MCF 10A (cell line): ENCODE measurements at regions of chr15 and their contacts with region 1.

Region 1: GRCh38 chr15:66946578-66947164 is 118.7 kb upstream of the SMAD3 start:
- DNase-seq: peak; percentile 83
- H3K4me3 Mint-ChIP-seq: no peak overlapping the region
- H3K27ac Mint-ChIP-seq: no peak overlapping the region
- H3K4me1 Mint-ChIP-seq: peaks cover 7% of the 10 kb centered on the region
- H3K27me3 Mint-ChIP-seq: no peaks in the 10 kb centered on the region
- CTCF ChIP-seq: peak; percentile 94

Region 2: DNA sequence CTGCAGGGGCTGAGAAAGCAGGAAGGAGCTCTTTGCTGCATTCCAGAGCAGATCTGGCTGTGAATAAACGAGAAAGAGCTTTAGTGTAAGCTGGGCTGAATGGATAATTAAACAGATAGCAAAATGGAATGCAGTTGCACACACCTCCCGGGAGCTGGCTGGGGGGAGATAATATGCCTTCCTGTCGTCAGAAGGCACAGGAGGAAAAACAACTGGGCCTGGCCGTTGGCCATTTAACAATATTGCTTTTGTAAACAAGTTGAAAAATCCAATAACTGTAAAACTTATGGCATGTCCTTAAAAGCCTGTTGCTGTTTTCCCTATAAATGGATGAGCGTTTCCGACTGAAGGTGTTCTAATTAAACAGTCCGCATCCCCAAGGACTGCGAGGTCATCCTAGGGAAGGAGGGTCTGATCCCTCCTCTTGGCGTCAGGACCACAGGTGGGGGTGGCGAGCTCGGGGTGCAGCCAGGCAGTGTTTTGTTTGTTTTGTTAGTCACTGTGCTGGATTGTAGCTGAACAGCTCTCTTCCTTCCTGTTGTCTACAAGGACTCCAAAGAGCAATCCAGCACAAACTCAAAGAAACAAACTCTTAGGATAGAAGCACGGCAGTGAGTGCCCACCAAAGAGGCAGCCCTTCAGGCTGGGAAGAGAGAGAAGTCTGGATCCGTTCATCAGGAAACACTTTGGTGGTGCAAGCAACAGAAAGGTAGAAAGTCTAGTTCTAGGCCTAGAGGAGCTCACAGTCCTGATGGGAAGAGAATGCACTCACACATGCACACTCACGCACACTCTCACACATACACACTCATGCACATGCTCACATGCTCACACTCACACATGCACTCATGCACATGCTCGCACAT is 14.7 kb before region 1 on chr15:
- CTCF ChIA-PET with region 1: interaction called, 10 read pairs
- POLR2A ChIA-PET with region 1: interaction called, 5 read pairs
- intact Hi-C with region 1: no loop called
- DNase-seq: peak; percentile 75
- H3K4me3 Mint-ChIP-seq: peak overlapping the region; percentile 7
- H3K27ac Mint-ChIP-seq: peak overlapping the region; percentile 3
- H3K4me1 Mint-ChIP-seq: peaks cover 26% of the 10 kb centered on the region
- H3K27me3 Mint-ChIP-seq: no peaks in the 10 kb centered on the region
- CTCF ChIP-seq: no peak

Region 3: DNA sequence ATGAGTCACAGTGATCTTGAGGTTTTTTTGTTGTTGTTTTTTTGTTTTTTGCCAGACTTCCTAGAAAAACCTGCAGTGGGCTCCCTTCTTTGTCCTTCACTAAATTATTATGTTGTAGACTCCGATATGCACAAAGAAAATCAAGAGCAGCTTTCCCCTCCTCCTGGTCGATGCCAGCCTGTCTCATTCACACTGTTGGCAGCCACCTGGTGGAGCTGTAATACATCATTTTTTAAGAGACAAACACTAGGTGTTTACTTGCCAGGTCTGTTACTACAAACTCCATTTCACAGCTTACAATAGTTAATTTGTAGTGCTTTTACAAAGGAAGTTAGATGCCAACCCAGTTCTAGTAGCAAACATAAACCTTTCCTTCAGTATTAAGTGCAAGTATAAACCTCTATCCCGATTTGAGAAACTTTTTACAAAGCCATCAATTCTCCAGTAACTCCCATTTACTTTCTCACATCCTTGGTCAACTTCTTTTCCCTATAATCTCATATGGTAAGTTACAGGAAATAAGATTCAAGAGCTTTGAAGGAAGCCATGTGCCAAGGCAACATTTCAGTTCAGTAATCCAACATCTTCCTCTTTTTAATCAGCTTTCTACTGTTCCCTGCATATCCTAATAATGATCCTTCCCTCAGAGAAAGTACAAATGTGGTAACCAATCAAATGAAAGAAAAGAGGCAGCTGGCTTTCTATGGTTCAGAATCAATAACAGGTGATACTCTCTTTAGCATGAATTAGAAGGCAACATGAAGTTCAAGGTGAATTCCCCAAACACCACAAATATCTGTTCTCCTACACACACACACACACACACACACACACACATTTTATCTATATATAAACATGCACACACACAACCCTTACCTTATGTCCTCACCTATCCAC is 293.8 kb after region 1 on chr15:
- CTCF ChIA-PET with region 1: interaction called, 26 read pairs
- POLR2A ChIA-PET with region 1: interaction called, 5 read pairs
- intact Hi-C with region 1: loop called (anchors 5 kb)
- DNase-seq: peak; percentile 57
- H3K4me3 Mint-ChIP-seq: no peak overlapping the region
- H3K27ac Mint-ChIP-seq: peak overlapping the region; percentile 51
- H3K4me1 Mint-ChIP-seq: peaks cover 31% of the 10 kb centered on the region
- H3K27me3 Mint-ChIP-seq: no peaks in the 10 kb centered on the region
- CTCF ChIP-seq: peak; percentile 38

Region 4: DNA sequence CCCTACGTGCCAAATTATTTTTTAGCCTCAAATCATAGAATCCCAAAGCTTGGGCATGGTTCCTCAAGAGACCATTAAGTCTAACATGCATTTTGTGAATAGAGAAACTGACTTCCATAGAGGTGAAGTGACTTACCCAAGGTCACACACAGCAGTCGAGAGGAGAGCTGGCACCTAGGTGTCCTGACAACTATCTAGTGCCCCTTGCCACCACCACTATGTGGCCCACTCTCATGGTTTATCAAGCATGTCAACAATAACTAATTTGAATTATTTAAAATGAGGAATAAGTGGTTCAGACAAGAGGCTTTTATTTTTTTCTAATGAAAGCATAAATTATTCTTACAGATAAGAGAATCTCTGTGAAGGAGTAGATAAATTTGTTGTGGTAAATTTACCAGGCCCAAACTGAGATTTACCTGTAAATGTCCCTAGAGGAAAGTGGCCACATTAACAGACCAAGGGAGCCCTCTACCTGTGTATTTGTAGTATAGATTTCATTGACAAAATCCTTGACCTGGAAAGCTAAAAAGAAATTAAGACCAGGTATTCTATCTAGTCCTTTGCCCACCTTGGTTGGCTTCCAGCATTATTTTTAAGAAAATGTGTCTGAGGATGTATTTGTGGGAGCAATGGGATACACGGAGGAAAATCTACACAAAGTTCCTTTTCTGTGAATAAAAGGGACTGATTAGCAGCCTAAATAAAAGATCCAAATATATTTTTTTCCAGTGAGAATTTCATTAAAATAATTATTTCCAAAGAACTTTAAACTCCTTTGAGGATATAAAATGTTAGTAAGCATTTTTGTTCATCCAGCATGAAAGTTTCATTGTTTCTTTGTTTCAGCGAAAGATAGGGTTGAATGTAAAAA is 357.1 kb after region 1 on chr15:
- CTCF ChIA-PET with region 1: interaction called, 26 read pairs
- POLR2A ChIA-PET with region 1: interaction called, 13 read pairs
- intact Hi-C with region 1: loop called (anchors 1 kb)
- DNase-seq: peak; percentile 63
- H3K4me3 Mint-ChIP-seq: no peak overlapping the region
- H3K27ac Mint-ChIP-seq: no peak overlapping the region
- H3K4me1 Mint-ChIP-seq: no peaks in the 10 kb centered on the region
- H3K27me3 Mint-ChIP-seq: no peaks in the 10 kb centered on the region
- CTCF ChIP-seq: peak; percentile 66

Region 5: GRCh38 chr15:67433495-67434099 is 486.9 kb after region 1 on chr15:
- CTCF ChIA-PET with region 1: interaction called, 4 read pairs
- POLR2A ChIA-PET with region 1: interaction called, 3 read pairs
- intact Hi-C with region 1: loop called (anchors 1 kb)
- DNase-seq: peak; percentile 54
- H3K4me3 Mint-ChIP-seq: no peak overlapping the region
- H3K27ac Mint-ChIP-seq: no peak overlapping the region
- H3K4me1 Mint-ChIP-seq: no peaks in the 10 kb centered on the region
- H3K27me3 Mint-ChIP-seq: no peaks in the 10 kb centered on the region
- CTCF ChIP-seq: peak; percentile 73